B cell (primary cell): ENCODE measurements at regions of chr4 and their contacts with region 1.

Region 1: GRCh38 chr4:39032218-39033085 is at the start of gene TMEM156:
- DNase-seq: peak; percentile 78
- ATAC-seq: peak; percentile 68
- H3K4me3 ChIP-seq: peak within 1 kb of the TSS; percentile 63 to 98 (median 69)
- H3K4me3 Mint-ChIP-seq: peak within 1 kb of the TSS; percentile 85
- H3K27ac ChIP-seq: peak within 1 kb of the TSS; percentile 72 to 84
- H3K27ac Mint-ChIP-seq: peak within 1 kb of the TSS; percentile 87
- H3K4me1 ChIP-seq: peaks cover 27 to 36% of the 10 kb centered on the region in 2 donors
- H3K4me1 Mint-ChIP-seq: peaks cover 54% of the 10 kb centered on the region
- H3K27me3 ChIP-seq: no peaks in the 10 kb centered on the region
- H3K27me3 Mint-ChIP-seq: no peaks in the 10 kb centered on the region
- CTCF ChIP-seq: no peak
- total RNA-seq, gene TMEM156: 59.9 and 61.4 TPM in 2 replicates

Region 2: DNA sequence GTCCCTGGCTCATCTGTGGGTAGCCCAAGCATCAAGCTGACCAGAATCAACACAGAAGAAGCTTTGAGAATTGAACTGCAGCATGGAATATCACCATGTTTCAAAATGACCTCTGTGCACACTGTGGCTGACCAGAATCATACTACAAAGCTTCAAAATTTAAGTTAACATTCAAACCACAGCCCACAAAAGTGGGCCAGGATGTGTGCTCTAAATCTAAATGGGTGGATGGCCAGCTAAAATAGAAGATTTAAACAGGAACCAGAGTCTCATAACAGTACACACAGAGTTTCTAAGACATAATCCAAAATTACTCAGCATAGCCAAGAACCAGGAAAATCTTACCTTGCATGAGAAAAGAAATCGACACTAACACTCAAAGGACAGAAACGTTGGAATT is 322.4 kb before region 1 on chr4:
- CTCF ChIA-PET with region 1: no interaction called
- POLR2A ChIA-PET with region 1: interaction called, 10 read pairs
- intact Hi-C with region 1: no loop called
- DNase-seq: no peak
- ATAC-seq: no peak
- H3K4me3 ChIP-seq: no peak overlapping the region
- H3K4me3 Mint-ChIP-seq: no peak overlapping the region
- H3K27ac ChIP-seq: no peak overlapping the region
- H3K27ac Mint-ChIP-seq: no peak overlapping the region
- H3K4me1 ChIP-seq: peaks cover 4 to 7% of the 10 kb centered on the region in 2 donors
- H3K4me1 Mint-ChIP-seq: peaks cover 11% of the 10 kb centered on the region
- H3K27me3 ChIP-seq: no peaks in the 10 kb centered on the region
- H3K27me3 Mint-ChIP-seq: peaks cover 2% of the 10 kb centered on the region
- CTCF ChIP-seq: no peak

Region 3: DNA sequence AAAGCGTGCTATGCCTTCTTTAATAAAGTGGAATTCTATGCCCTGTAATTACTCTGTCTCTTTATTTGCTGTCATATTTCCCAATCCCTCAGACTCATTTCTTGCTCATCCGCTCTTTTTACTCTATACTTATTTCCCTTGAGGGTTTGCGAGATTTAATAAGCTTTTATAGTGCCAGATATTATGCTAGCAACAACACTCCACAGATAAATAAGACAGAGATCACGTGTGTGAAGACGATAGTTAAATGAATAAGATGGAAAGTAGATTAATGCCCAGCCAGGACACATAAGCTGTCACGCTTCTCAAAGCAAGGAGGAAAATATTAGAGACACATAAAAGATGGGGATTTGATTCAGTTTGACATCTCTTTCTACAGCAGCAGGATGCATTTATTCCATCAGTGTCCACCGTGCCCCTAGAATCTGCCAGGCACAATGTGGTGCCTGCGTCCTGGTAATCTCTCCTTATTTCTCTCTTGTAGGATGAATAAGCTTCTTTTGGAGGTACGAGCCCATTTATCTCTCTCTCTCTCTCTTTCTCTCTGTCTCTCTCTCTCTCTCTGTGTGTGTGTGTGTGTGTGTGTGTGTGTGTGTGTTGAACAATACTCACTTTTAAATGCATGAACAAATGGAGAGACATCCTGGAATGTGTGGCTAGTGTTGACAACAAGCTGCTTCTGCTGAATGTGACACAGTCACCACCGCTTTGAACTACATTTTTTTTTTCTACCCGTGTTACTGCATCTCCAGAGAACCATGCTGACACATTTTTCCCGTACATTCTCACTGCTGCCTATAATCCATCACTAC is 48.5 kb before region 1 on chr4:
- CTCF ChIA-PET with region 1: interaction called, 7 read pairs
- POLR2A ChIA-PET with region 1: interaction called, 5 read pairs
- intact Hi-C with region 1: loop called (anchors 1 kb)
- DNase-seq: no peak
- ATAC-seq: no peak
- H3K4me3 ChIP-seq: no peak overlapping the region
- H3K4me3 Mint-ChIP-seq: peak overlapping the region; percentile 21
- H3K27ac ChIP-seq: peak overlapping the region in 1 of 2 donors; percentile 86
- H3K27ac Mint-ChIP-seq: peak overlapping the region; percentile 42
- H3K4me1 ChIP-seq: peaks cover 35 to 37% of the 10 kb centered on the region in 2 donors
- H3K4me1 Mint-ChIP-seq: peaks cover 53% of the 10 kb centered on the region
- H3K27me3 ChIP-seq: no peaks in the 10 kb centered on the region
- H3K27me3 Mint-ChIP-seq: no peaks in the 10 kb centered on the region
- CTCF ChIP-seq: no peak

Region 4: DNA sequence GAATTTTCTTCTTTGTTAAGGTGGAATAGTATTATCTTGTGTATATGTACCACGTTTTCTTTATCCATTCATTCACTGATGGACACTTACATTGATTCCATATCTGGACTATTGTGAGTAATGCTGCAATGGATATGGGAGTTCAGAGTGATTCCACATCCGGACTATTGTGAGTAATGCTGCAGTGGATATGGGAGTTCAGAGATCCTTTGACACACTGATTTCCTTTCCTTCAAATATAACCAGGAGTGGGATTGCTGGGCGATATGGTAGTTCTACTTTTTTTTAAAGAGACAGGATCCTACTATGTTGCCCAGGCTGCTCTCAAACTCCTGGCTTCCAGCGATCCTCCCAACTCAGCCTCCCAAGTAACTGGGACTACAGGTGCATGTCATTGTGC is 12.3 kb before region 1 on chr4:
- CTCF ChIA-PET with region 1: interaction called, 3 read pairs
- POLR2A ChIA-PET with region 1: interaction called, 5 read pairs
- intact Hi-C with region 1: loop called (anchors 2 kb)
- DNase-seq: no peak
- ATAC-seq: no peak
- H3K4me3 ChIP-seq: no peak overlapping the region
- H3K4me3 Mint-ChIP-seq: no peak overlapping the region
- H3K27ac ChIP-seq: peak overlapping the region in 1 of 2 donors; percentile 15
- H3K27ac Mint-ChIP-seq: peak overlapping the region; percentile 47
- H3K4me1 ChIP-seq: peaks cover 5 to 7% of the 10 kb centered on the region in 2 donors
- H3K4me1 Mint-ChIP-seq: peaks cover 49% of the 10 kb centered on the region
- H3K27me3 ChIP-seq: no peaks in the 10 kb centered on the region
- H3K27me3 Mint-ChIP-seq: no peaks in the 10 kb centered on the region
- CTCF ChIP-seq: no peak

Region 5: GRCh38 chr4:39353478-39354253 is 321.2 kb after region 1 on chr4:
- CTCF ChIA-PET with region 1: no interaction called
- POLR2A ChIA-PET with region 1: no interaction called
- intact Hi-C with region 1: loop called (anchors 10 kb)
- DNase-seq: peak; percentile 67
- ATAC-seq: peak; percentile 59
- H3K4me3 ChIP-seq: peak overlapping the region; percentile 2 to 72 (median 43)
- H3K4me3 Mint-ChIP-seq: peak overlapping the region; percentile 90
- H3K27ac ChIP-seq: peak overlapping the region; percentile 46 to 74
- H3K27ac Mint-ChIP-seq: peak overlapping the region; percentile 89
- H3K4me1 ChIP-seq: peaks cover 50 to 54% of the 10 kb centered on the region in 2 donors
- H3K4me1 Mint-ChIP-seq: peaks cover 54% of the 10 kb centered on the region
- H3K27me3 ChIP-seq: no peaks in the 10 kb centered on the region
- H3K27me3 Mint-ChIP-seq: no peaks in the 10 kb centered on the region
- CTCF ChIP-seq: no peak